CD4-positive, alpha-beta memory T cell (primary cell): ENCODE measurements at regions of chrX and their contacts with region 1.

Region 1: GRCh38 chrX:79146640-79147390 is 2.3 kb downstream of the GPR174 start:
- DNase-seq: peak in 2 of 5 donors; percentile 30 to 36
- H3K4me3 ChIP-seq: peak overlapping the region; percentile 45 to 81
- H3K4me3 Mint-ChIP-seq: peak overlapping the region; percentile 83 to 98 (median 95)
- H3K27ac ChIP-seq: peak overlapping the region; percentile 76
- H3K27ac Mint-ChIP-seq: peak overlapping the region; percentile 86 to 98 (median 93)
- H3K4me1 ChIP-seq: peaks cover 53% of the 10 kb centered on the region
- H3K4me1 Mint-ChIP-seq: peaks cover 11 to 56% (median 23%) of the 10 kb centered on the region in 4 donors
- H3K27me3 ChIP-seq: no peaks in the 10 kb centered on the region
- H3K27me3 Mint-ChIP-seq: no peaks in the 10 kb centered on the region

Region 2: DNA sequence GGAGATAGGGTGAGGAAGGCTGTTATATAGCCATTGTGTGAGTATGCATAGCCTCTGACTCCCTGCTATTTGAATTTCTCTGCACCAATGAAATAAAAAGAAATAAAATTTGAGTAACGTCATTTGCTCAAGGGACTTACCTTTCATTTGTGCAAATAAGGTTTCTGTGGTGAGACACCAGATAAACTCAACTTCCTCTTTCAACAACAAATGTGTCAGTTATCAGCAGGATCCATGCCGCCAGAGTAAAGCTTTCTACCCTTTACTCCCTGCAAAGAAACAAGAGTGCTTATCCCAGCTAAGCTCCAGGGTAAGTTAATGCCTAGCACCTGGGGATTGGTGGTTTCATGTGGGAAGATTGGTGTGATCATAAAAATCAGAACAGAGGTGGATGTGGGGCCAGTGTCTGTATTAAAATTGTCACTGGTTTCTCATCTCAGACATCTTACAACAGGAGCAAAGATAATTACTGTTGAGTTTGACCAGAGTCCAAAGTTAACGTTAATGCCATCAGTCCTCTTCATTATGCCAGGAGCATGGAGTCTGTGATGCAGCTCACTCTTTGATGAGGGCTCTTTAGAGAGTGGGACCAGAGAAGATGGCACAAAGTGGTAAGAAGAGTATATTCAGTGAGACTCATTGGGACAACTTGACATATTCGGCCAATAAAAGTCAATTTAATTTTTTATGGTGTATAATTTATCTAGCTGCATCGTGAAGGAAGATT is 201.5 kb before region 1 on chrX and contains the start of gene P2RY10:
- CTCF ChIA-PET with region 1: no interaction called
- POLR2A ChIA-PET with region 1: interaction called, 18 read pairs
- intact Hi-C with region 1: no loop called
- DNase-seq: peak; percentile 70 to 80 (median 74)
- H3K4me3 ChIP-seq: peak within 1 kb of the TSS; percentile 59 to 86
- H3K4me3 Mint-ChIP-seq: peak within 1 kb of the TSS; percentile 87 to 99 (median 96)
- H3K27ac ChIP-seq: peak within 1 kb of the TSS; percentile 68
- H3K27ac Mint-ChIP-seq: peak within 1 kb of the TSS; percentile 95 to 100 (median 97)
- H3K4me1 ChIP-seq: peaks cover 45% of the 10 kb centered on the region
- H3K4me1 Mint-ChIP-seq: peaks cover 22 to 69% (median 36%) of the 10 kb centered on the region in 4 donors
- H3K27me3 ChIP-seq: no peaks in the 10 kb centered on the region
- H3K27me3 Mint-ChIP-seq: no peaks in the 10 kb centered on the region
- total RNA-seq, gene P2RY10: 87.4 to 104 TPM

Region 3: DNA sequence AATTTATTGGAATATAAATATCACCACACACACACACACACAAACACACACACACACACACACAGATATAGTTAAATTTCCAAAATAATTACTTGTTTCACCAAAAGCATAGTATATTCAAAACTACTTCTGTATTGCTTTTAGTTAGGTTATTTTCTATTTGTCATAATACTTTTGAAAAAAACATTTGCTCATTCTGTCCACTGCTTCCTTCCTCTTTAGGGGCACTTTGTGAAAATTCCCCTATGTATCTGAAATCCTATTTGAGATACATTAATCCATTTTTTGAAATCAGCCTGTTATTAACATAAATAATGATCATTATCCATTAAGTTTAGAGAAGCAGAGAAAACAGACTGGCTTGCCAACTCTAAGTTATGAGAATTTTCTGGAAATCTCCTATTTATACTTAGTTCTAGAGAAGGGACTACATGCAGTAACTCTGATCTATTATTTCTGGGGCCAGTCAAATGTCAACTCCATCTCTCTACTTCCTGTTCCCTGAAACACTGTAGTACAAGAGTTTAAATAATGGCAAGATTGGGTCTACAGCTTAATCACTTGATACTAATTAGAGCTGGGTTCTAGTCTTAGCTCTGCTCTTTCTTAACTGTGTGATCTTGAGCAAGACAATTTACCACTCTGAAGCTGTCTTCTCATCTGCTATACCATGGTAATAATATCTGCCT is 56.8 kb before region 1 on chrX:
- CTCF ChIA-PET with region 1: interaction called, 4 read pairs
- POLR2A ChIA-PET with region 1: interaction called, 34 read pairs
- intact Hi-C with region 1: no loop called
- DNase-seq: no peak
- H3K4me3 ChIP-seq: no peak overlapping the region
- H3K4me3 Mint-ChIP-seq: peak overlapping the region in 3 of 8 donors; percentile 3 to 43 (median 36)
- H3K27ac ChIP-seq: no peak overlapping the region
- H3K27ac Mint-ChIP-seq: peak overlapping the region; percentile 36 to 89 (median 78)
- H3K4me1 ChIP-seq: peaks cover 60% of the 10 kb centered on the region
- H3K4me1 Mint-ChIP-seq: peaks cover 13 to 57% (median 28%) of the 10 kb centered on the region in 4 donors
- H3K27me3 ChIP-seq: no peaks in the 10 kb centered on the region
- H3K27me3 Mint-ChIP-seq: no peaks in the 10 kb centered on the region

Region 4: DNA sequence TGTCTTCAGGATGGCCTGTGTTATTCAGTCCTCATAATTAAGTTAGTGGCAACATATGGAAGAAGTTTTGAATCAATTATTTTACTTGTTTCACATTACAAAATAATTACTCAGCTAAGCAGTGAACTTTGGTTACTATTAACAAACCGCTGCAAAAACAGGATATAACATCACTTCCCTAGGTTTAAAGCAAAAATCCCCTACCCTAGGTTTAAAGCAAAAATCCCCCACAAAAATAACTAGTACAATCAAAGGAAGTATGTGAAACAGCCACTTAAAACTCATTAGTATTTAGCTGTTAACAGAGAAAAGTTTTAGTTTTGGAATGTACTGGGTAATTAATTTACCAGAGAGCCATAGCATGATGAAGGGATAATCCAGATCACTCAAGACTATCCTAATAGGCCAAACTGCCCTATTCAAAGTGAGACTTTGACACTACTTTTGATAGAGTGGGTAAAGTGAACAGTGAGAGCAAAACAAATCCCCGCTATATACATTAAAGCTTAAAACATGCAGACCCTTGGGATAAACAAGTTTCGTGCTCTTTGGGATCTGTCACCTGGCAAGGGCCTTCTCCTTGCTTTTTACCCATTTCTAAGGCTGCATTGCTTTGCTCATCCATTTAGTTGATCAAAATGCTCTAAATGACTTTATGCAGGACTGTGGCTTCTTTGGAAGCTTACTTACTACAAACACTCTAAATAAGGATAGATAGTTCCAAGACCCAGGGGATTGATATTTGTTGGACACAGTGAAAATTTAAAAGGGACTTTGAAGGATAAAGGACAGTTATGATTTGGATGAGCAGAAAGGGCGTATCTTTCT is 38.7 kb before region 1 on chrX:
- CTCF ChIA-PET with region 1: interaction called, 10 read pairs
- POLR2A ChIA-PET with region 1: interaction called, 161 read pairs
- intact Hi-C with region 1: loop called (anchors 1 kb)
- DNase-seq: peak in 4 of 5 donors; percentile 71 to 81 (median 75)
- H3K4me3 ChIP-seq: peak overlapping the region in 1 of 2 donors; percentile 28
- H3K4me3 Mint-ChIP-seq: peak overlapping the region; percentile 54 to 82 (median 74)
- H3K27ac ChIP-seq: peak overlapping the region; percentile 95
- H3K27ac Mint-ChIP-seq: peak overlapping the region; percentile 96 to 99 (median 97)
- H3K4me1 ChIP-seq: peaks cover 68% of the 10 kb centered on the region
- H3K4me1 Mint-ChIP-seq: peaks cover 27 to 70% (median 47%) of the 10 kb centered on the region in 4 donors
- H3K27me3 ChIP-seq: no peaks in the 10 kb centered on the region
- H3K27me3 Mint-ChIP-seq: no peaks in the 10 kb centered on the region

Region 5: DNA sequence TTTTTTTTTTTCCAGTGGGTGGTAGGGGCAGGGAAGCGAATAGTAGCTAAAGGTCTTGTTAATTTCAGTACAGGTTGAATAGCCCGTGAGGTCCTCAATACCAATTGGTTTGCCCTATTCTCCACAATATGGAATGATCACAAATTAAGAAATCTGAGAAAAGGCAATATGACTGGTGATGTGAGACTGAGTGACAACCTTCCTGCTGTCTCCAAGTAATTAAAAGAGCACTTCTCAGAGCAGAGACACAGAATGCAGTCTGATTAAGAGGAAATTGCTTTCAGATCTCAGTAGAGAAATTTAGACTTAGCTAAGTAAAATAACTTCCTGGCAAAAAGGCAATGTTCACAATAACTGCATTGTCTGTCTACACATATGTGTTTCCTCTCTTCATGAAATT is 20.6 kb after region 1 on chrX:
- CTCF ChIA-PET with region 1: interaction called, 6 read pairs
- POLR2A ChIA-PET with region 1: interaction called, 109 read pairs
- intact Hi-C with region 1: no loop called
- DNase-seq: no peak
- H3K4me3 ChIP-seq: peak overlapping the region in 1 of 2 donors; percentile 23
- H3K4me3 Mint-ChIP-seq: peak overlapping the region; percentile 19 to 81 (median 60)
- H3K27ac ChIP-seq: peak overlapping the region; percentile 66
- H3K27ac Mint-ChIP-seq: peak overlapping the region; percentile 77 to 97 (median 90)
- H3K4me1 ChIP-seq: peaks cover 98% of the 10 kb centered on the region
- H3K4me1 Mint-ChIP-seq: peaks cover 47 to 95% (median 67%) of the 10 kb centered on the region in 4 donors
- H3K27me3 ChIP-seq: no peaks in the 10 kb centered on the region
- H3K27me3 Mint-ChIP-seq: no peaks in the 10 kb centered on the region

Region 6: GRCh38 chrX:79259073-79259689 is 112.4 kb after region 1 on chrX:
- CTCF ChIA-PET with region 1: no interaction called
- POLR2A ChIA-PET with region 1: interaction called, 19 read pairs
- intact Hi-C with region 1: loop called (anchors 2 kb)
- DNase-seq: peak; percentile 71 to 82 (median 77)
- H3K4me3 ChIP-seq: no peak overlapping the region
- H3K4me3 Mint-ChIP-seq: peak overlapping the region; percentile 46 to 87 (median 66)
- H3K27ac ChIP-seq: peak overlapping the region; percentile 58
- H3K27ac Mint-ChIP-seq: peak overlapping the region; percentile 86 to 96 (median 94)
- H3K4me1 ChIP-seq: peaks cover 89% of the 10 kb centered on the region
- H3K4me1 Mint-ChIP-seq: peaks cover 51 to 86% (median 68%) of the 10 kb centered on the region in 4 donors
- H3K27me3 ChIP-seq: no peaks in the 10 kb centered on the region
- H3K27me3 Mint-ChIP-seq: no peaks in the 10 kb centered on the region

Region 7: DNA sequence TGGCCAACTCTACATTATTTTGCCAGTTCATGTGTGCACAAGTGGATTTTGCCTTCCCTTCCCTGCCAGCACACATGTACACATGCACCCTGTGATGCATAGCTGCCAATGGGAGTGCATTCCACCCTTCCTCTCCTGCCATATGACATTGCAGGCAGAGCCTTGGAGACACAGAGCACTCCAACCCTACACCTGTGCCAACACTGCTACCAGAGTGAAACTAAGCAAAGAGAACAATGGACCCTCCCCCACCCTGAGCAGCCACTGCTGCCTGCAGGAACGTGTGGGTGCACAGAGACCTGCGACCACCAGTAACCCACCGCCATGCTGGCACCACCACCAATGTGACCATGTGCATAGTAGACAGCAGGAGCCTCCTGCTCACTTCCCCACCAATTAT is 141.9 kb after region 1 on chrX:
- CTCF ChIA-PET with region 1: no interaction called
- POLR2A ChIA-PET with region 1: no interaction called
- intact Hi-C with region 1: no loop called
- DNase-seq: no peak
- H3K4me3 ChIP-seq: no peak overlapping the region
- H3K4me3 Mint-ChIP-seq: no peak overlapping the region
- H3K27ac ChIP-seq: no peak overlapping the region
- H3K27ac Mint-ChIP-seq: peak overlapping the region in 1 of 7 donors; percentile 68
- H3K4me1 ChIP-seq: no peaks in the 10 kb centered on the region
- H3K4me1 Mint-ChIP-seq: peaks cover 0 to 3% (median 0%) of the 10 kb centered on the region in 4 donors
- H3K27me3 ChIP-seq: no peaks in the 10 kb centered on the region
- H3K27me3 Mint-ChIP-seq: no peaks in the 10 kb centered on the region